ENCODE measurements at regions of chr12 and their contacts with region 1.

Region 1: GRCh38 chr12:1594261-1595025 is at the start of gene FBXL14:
- DNase-seq: peak; percentile 86
- CTCF ChIP-seq: no peak

Region 2: DNA sequence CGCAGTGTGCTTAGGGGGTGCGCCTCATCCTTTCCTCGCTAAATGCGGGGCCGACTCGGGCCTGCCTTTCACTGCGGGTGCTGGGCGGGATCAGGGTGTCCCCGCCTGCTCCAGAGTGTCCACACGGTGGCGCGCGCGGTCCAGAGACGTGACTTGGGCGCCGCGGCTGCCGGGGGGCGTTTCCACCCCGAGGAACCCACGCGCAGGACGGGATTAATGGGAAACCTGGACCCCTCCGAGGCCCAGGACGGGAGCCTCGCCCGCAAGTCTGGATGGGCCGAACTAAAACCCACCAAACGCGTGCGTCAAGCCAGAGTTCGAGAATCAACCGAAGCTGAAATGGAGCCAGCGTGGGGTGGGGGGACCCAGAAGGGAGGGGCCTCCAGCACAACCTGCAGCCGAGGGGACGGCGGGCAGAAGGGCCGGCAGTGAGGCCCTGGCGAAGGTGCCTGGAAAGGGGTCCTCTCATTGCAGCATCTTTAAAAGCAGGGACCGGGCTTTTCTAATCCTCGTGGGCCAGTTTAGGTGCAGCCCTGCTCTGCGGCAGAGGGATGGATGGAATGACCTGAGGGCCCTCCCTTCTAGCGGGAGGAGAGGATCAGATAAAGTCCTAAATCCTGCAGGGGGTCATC is 1024.5 kb before region 1 on chr12:
- in situ Hi-C with region 1: loop called (anchors 25 kb)
- DNase-seq: peak; percentile 96
- CTCF ChIP-seq: peak; percentile 98

Region 3: GRCh38 chr12:1162081-1162760 is 432.2 kb before region 1 on chr12:
- in situ Hi-C with region 1: no loop called
- DNase-seq: no peak
- CTCF ChIP-seq: no peak

Region 4: DNA sequence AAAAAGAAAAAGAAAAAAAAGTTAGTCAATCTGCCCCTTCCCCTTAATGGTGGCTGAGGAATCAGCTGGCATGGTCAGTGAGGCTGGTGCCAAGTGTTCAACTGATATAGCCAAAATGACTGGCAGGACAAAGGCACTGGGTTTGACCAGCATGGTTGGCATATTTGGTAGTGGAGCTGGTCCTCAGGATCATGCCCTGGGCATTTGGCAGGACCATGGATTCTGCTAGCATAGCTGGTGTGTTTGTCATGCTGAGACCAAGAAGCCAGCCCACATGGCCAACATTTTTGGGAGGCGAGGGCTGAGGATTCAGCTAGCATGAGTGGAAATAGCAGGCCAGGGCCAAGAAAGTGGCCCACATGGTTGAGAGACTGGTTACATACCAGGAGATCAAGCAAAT is 136.5 kb before region 1 on chr12:
- in situ Hi-C with region 1: no loop called
- DNase-seq: no peak
- CTCF ChIP-seq: no peak

Region 5: GRCh38 chr12:2013527-2014223 is 419.2 kb after region 1 on chr12:
- in situ Hi-C with region 1: no loop called
- DNase-seq: no peak
- CTCF ChIP-seq: no peak

Measured in GM13976 (cell line).